Activated CD4-positive, alpha-beta memory T cell treated with anti-CD3 and anti-CD28 coated beads, Interleukin-2, amount 10 ng/mL, durations not matched to agents 7 days and 5 days (primary cell): ENCODE measurements at regions of chr10 and their contacts with region 1.

Region 1: GRCh38 chr10:30534465-30535144 is 94.9 kb downstream of the LYZL2 start:
- DNase-seq: peak; percentile 76
- H3K4me3 Mint-ChIP-seq: no peak overlapping the region
- H3K27ac Mint-ChIP-seq: no peak overlapping the region
- H3K4me1 Mint-ChIP-seq: peaks cover 45% of the 10 kb centered on the region
- H3K27me3 Mint-ChIP-seq: no peaks in the 10 kb centered on the region

Region 2: DNA sequence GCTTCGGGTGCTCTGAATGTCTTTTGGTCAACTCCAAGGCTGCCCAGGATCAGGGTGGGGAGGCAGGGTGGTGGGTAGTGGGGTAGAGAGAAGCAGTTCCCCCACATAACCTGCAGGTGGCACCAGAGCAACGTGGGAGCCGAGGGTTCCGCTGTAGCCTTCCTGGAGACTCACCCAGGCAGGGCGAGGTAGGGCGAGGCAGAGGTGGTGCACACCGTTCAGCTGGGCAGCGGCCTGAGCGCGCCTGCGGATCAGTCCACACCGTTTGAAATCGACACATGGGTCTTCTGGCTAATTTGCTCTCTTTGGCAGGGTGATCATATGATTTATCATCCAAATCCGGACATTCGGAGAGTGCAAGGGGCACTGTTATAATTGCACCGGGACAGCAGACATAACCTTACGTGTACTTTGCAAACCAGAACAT is 142.0 kb before region 1 on chr10:
- CTCF ChIA-PET with region 1: interaction called, 26 read pairs
- POLR2A ChIA-PET with region 1: no interaction called
- DNase-seq: peak; percentile 80
- H3K4me3 Mint-ChIP-seq: no peak overlapping the region
- H3K27ac Mint-ChIP-seq: no peak overlapping the region
- H3K4me1 Mint-ChIP-seq: peaks cover 9% of the 10 kb centered on the region
- H3K27me3 Mint-ChIP-seq: peaks cover 39% of the 10 kb centered on the region

Region 3: GRCh38 chr10:30413996-30414576 is 120.5 kb before region 1 on chr10:
- CTCF ChIA-PET with region 1: interaction called, 39 read pairs
- POLR2A ChIA-PET with region 1: interaction called, 11 read pairs
- DNase-seq: no peak
- H3K4me3 Mint-ChIP-seq: no peak overlapping the region
- H3K27ac Mint-ChIP-seq: no peak overlapping the region
- H3K4me1 Mint-ChIP-seq: peaks cover 42% of the 10 kb centered on the region
- H3K27me3 Mint-ChIP-seq: no peaks in the 10 kb centered on the region